ENCODE measurements at regions of chr1 and their contacts with region 1.

Region 1: DNA sequence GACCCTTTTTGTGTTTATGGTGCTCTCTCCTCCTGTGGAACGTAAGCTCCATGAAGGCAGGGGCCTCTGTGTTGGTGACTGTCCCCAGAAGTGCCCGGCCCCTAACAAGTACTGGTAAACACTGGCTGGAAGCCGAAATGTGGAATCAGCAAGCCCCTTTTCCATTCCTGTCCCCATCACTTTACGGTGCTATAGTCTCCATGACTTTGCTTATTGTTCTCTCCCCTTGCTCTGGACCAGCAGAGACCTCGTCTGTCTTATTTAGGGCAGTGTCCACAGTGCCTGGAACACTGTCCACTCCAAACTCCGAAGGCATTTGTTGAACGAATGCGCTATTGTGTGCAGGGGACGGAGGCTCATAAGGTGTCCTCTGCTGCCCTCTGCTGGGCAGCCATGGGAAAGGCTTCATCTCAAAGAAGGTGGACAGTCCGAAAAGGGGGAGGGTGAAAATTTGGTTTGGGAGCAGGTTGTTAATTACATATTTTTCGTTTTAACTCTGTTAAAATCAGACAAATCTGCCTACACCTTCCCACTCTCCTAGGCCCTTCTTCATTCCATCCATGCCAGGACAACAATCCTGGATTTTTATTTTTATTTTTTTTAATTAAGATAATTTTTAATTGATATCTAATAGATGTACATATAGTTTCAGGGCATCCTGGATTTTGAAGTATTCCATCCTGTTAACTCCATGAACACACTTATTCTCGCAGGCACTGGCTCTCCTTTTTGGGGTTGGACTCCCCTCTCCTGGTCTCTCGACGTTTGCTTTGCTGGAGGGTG is 115.6 kb downstream of the PGBD5 start:
- DNase-seq: peak; percentile 34
- H3K4me3 Mint-ChIP-seq: no peak overlapping the region
- H3K27ac Mint-ChIP-seq: no peak overlapping the region
- H3K4me1 Mint-ChIP-seq: peaks cover 11% of the 10 kb centered on the region
- H3K27me3 Mint-ChIP-seq: peaks cover 3% of the 10 kb centered on the region

Region 2: DNA sequence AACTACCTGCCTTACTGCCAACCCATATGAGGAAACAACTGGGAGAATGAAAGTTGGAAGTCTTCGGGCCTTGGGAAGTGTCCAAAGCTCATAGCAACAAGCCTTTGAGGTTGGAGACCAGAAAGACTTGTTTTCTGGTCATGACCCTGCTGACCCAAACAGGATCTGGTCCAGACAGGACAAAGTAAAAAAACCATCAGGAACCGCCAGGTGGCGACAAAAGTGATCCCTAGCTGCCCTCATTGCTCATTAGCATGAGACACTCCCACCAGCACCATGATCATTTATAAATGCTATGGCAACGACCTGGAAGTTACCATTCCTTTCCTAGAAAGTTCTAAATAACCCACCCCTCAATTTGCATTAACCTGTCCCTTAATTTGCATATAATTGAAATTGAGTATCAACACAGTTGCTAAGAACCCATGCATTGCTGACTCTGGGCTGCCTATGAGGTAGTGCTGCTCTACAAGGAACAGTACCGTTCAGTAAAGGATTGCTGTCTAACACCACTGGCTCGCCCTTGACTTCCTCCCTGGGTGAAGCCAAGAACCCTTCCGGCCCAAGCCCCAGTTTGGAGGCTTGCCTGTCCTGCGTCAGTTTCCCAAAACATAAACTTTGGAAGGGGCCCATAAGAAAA is 595.5 kb before region 1 on chr1:
- intact Hi-C with region 1: loop called (anchors 1 kb)
- DNase-seq: peak; percentile 14
- H3K4me3 Mint-ChIP-seq: no peak overlapping the region
- H3K27ac Mint-ChIP-seq: no peak overlapping the region
- H3K4me1 Mint-ChIP-seq: no peaks in the 10 kb centered on the region
- H3K27me3 Mint-ChIP-seq: peaks cover 6% of the 10 kb centered on the region